WTC11 (cell line): ENCODE measurements at regions of chr10 and their contacts with region 1.

Region 1: GRCh38 chr10:11782793-11783557 is 40.2 kb upstream of the PROSER2 start:
- DNase-seq: no peak
- ATAC-seq: peak; percentile 62
- H3K4me3 Mint-ChIP-seq: no peak overlapping the region
- H3K27ac Mint-ChIP-seq: no peak overlapping the region
- H3K4me1 Mint-ChIP-seq: peaks cover 8% of the 10 kb centered on the region
- H3K27me3 Mint-ChIP-seq: no peaks in the 10 kb centered on the region
- CTCF ChIP-seq: peak; percentile 52

Region 2: GRCh38 chr10:11729726-11730315 is 53.2 kb before region 1 on chr10:
- CTCF ChIA-PET with region 1: no interaction called
- POLR2A ChIA-PET with region 1: no interaction called
- DNase-seq: no peak
- ATAC-seq: no peak
- H3K4me3 Mint-ChIP-seq: no peak overlapping the region
- H3K27ac Mint-ChIP-seq: no peak overlapping the region
- H3K4me1 Mint-ChIP-seq: no peaks in the 10 kb centered on the region
- H3K27me3 Mint-ChIP-seq: no peaks in the 10 kb centered on the region; the same call in 1 of the 2 replicates
- CTCF ChIP-seq: no peak

Region 3: GRCh38 chr10:11793762-11794479 is 10.9 kb after region 1 on chr10:
- CTCF ChIA-PET with region 1: interaction called, 24 read pairs
- POLR2A ChIA-PET with region 1: no interaction called
- DNase-seq: no peak
- ATAC-seq: no peak
- H3K4me3 Mint-ChIP-seq: no peak overlapping the region
- H3K27ac Mint-ChIP-seq: no peak overlapping the region
- H3K4me1 Mint-ChIP-seq: peaks cover 19% of the 10 kb centered on the region
- H3K27me3 Mint-ChIP-seq: no peaks in the 10 kb centered on the region
- CTCF ChIP-seq: no peak

Region 4: GRCh38 chr10:11798845-11799735 is 16.1 kb after region 1 on chr10:
- CTCF ChIA-PET with region 1: interaction called, 24 read pairs
- POLR2A ChIA-PET with region 1: no interaction called
- DNase-seq: no peak
- ATAC-seq: peak; percentile 74
- H3K4me3 Mint-ChIP-seq: no peak overlapping the region
- H3K27ac Mint-ChIP-seq: peak overlapping the region; percentile 75
- H3K4me1 Mint-ChIP-seq: peaks cover 28% of the 10 kb centered on the region
- H3K27me3 Mint-ChIP-seq: no peaks in the 10 kb centered on the region
- CTCF ChIP-seq: no peak

Region 5: GRCh38 chr10:11958956-11959355 is 176.0 kb after region 1 on chr10:
- CTCF ChIA-PET with region 1: no interaction called
- POLR2A ChIA-PET with region 1: no interaction called
- DNase-seq: no peak
- ATAC-seq: no peak
- H3K4me3 Mint-ChIP-seq: no peak overlapping the region
- H3K27ac Mint-ChIP-seq: no peak overlapping the region
- H3K4me1 Mint-ChIP-seq: no peaks in the 10 kb centered on the region
- H3K27me3 Mint-ChIP-seq: no peaks in the 10 kb centered on the region
- CTCF ChIP-seq: no peak

Region 6: DNA sequence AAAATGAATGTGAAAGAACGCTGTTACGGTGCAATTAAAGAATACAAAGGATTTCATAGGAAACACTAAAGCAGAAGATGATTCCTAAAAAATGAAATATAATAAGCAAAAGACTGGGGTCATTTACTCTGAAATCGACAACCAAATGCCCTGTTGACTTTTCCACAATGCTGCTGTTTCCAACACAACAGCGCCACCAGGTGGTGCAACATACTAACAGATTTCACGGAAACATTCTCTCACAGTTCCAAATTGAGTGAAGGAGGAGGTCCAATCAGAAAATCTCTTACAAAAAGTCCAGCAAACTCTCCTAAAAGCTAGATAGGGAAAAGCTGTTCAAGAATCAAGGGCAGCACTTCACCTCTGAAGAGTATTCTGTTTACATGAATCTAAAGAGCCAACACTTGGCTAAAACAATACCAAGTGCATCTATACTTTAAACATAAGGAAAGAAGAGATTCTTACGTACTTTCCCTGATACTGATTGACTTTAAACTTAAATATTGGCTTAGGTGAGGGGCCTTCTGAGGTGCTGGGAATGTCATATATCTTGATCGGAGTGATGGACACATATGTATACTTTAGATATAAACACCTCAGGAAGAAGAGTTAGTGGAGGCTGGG is 203.7 kb after region 1 on chr10:
- CTCF ChIA-PET with region 1: interaction called, 27 read pairs
- POLR2A ChIA-PET with region 1: no interaction called
- DNase-seq: peak; percentile 82
- ATAC-seq: peak; percentile 67
- H3K4me3 Mint-ChIP-seq: no peak overlapping the region
- H3K27ac Mint-ChIP-seq: peak overlapping the region; percentile 82
- H3K4me1 Mint-ChIP-seq: no peaks in the 10 kb centered on the region
- H3K27me3 Mint-ChIP-seq: no peaks in the 10 kb centered on the region
- CTCF ChIP-seq: peak; percentile 89